Tibial artery (tissue), 4 donors: ENCODE measurements at regions of chr13 and their contacts with region 1.

Region 1: DNA sequence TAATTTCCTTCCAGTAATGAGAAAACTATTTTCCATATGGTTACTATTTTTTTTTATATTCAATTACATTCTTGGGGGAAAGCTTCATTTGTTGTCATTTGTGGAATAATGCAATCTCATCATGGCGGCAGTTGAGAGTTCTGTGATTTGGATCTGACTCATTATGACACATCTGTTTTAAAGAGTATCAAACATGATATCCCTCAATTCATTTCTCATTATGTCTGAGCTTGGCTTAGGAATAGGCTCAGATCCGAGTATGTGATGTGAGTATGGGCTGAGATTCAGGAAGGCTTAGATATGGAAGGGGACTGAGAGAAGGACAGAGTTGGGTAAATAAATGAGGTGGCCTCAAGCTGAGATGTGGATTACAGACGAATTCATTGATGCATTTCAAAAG is 64.4 kb downstream of the POSTN start:
- DNase-seq: no peak
- H3K4me3 ChIP-seq: no peak overlapping the region
- H3K27ac ChIP-seq: no peak overlapping the region
- H3K4me1 ChIP-seq: no peaks in the 10 kb centered on the region
- H3K27me3 ChIP-seq: no peaks in the 10 kb centered on the region
- CTCF ChIP-seq: no peak

Region 2: DNA sequence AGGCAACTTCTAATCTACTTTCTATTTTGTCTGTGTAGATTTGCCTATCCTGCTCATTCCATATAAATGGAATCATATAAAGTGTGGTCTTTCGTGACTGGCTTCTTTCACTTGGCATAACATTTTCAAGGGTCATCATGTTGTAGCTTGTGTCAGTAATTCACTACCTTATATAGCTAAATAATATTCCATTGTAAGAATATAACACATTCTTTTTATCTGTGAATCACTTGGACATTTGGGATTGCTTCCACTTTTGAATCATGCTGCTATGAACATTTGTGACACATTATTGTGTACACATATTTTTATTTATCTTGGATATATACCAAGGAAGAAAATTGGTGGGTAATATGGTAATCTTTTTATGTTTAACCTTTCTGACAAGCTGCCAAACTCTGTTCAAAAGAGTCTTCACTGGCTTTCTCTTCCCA is 339.7 kb before region 1 on chr13:
- intact Hi-C with region 1: loop called (anchors 5 kb)
- DNase-seq: no peak
- H3K4me3 ChIP-seq: no peak overlapping the region
- H3K27ac ChIP-seq: no peak overlapping the region
- H3K4me1 ChIP-seq: no peaks in the 10 kb centered on the region
- H3K27me3 ChIP-seq: no peaks in the 10 kb centered on the region
- CTCF ChIP-seq: no peak

Region 3: DNA sequence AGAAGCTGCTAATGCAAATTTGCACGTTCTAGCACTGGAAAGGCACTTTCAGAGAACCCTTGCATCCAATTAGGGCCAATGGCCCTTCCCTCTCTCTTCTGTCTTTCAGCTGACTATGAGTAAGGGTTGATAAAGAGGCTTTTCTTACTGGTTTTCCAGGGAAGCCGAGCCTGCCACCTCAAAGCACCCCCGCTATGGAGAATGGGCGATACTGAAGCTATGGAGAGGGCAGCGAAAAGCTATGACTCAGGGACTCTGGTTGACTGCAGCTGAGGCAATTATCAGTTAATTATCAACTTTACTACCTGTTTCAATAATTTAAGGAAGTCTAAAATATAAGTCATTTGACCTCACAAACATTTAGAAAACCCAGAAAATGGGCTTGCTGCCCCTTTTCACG is 219.6 kb after region 1 on chr13:
- intact Hi-C with region 1: no loop called
- DNase-seq: no peak
- H3K4me3 ChIP-seq: no peak overlapping the region
- H3K27ac ChIP-seq: no peak overlapping the region
- H3K4me1 ChIP-seq: no peaks in the 10 kb centered on the region
- H3K27me3 ChIP-seq: no peaks in the 10 kb centered on the region
- CTCF ChIP-seq: no peak